Activated naive CD4-positive, alpha-beta T cell treated with anti-CD3 and anti-CD28 coated beads, Interleukin-2, amount 10 ng/mL, durations not matched to agents 7 days and 5 days (primary cell): ENCODE measurements at regions of chr19 and their contacts with region 1.

Region 1: DNA sequence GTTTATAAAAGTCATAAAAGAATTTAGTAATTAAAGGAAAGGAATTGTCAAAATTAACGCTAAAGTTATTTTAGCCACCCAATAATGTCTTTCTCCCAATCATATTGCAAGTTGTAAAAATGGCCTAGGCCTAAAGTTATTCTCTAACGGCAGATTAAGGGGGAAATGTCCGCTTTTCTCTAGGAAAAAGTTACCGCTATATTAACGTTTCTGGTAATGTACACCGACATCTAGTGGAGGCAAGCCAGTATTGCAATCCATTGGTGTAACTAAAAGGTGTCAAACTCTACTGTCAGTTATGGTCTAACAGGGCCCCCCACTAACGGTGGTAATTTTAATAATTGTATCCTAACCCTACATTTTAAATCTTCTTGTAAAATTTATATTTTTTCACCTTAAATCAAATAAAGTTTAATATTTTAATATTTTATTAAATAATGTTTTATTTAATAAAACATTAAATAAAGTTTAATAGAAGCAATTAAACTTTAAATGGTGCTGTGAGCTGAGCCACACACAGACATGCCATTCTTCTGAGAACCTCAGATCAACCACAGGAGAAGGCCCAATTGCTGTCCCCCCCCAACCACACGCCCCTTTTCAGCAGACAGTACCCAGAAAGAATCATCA is 35.9 kb upstream of the ZSCAN5A start:
- DNase-seq: peak; percentile 66
- H3K4me3 Mint-ChIP-seq: no peak overlapping the region
- H3K27ac Mint-ChIP-seq: no peak overlapping the region
- H3K4me1 Mint-ChIP-seq: no peaks in the 10 kb centered on the region
- H3K27me3 Mint-ChIP-seq: no peaks in the 10 kb centered on the region

Region 2: DNA sequence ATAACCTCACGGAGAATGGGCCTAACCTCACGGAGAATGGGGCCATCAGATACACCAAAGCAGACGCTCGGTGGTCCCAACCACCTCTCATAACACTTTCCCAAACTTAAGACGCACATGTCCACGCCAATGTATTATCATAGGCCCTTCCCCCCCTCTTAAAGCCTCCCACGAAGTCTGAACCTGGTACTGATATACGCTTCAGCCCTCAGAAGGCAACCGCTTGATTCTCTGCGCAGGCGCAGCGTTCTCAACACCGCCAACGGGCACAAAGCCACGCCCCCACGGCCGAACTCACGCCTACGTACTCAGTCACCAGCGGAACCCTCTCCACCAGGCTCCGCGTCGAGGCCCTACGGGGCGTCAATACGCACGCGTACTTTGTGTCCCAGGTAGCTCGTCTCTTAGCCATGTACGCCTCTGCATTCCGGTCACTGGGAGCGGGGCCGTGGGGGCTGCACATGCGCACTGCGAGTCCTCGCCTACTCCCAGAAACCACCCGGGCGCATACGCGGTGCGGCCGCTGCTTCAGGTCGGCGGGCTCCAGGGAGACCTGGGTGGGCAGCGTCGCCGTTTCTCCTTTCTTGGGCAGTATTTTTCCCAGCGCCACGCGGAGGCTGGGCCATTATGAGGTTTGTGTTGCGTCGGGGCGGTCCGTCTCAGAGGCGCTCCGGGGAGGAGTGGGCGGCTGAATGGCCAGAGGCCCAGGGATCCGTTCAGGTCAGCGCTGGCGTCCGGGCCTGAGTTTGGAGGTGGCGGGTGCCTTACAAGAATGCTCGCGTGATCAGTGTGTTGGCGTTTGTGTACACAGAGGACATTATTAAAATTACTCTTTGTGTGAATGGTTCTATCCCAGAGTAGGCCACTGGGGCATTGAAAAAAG is 17.5 kb after region 1 on chr19:
- CTCF ChIA-PET with region 1: interaction called, 11 read pairs
- DNase-seq: peak; percentile 88
- H3K4me3 Mint-ChIP-seq: peak overlapping the region; percentile 84
- H3K27ac Mint-ChIP-seq: peak overlapping the region; percentile 88
- H3K4me1 Mint-ChIP-seq: peaks cover 20% of the 10 kb centered on the region
- H3K27me3 Mint-ChIP-seq: peaks cover 9% of the 10 kb centered on the region

Region 3: DNA sequence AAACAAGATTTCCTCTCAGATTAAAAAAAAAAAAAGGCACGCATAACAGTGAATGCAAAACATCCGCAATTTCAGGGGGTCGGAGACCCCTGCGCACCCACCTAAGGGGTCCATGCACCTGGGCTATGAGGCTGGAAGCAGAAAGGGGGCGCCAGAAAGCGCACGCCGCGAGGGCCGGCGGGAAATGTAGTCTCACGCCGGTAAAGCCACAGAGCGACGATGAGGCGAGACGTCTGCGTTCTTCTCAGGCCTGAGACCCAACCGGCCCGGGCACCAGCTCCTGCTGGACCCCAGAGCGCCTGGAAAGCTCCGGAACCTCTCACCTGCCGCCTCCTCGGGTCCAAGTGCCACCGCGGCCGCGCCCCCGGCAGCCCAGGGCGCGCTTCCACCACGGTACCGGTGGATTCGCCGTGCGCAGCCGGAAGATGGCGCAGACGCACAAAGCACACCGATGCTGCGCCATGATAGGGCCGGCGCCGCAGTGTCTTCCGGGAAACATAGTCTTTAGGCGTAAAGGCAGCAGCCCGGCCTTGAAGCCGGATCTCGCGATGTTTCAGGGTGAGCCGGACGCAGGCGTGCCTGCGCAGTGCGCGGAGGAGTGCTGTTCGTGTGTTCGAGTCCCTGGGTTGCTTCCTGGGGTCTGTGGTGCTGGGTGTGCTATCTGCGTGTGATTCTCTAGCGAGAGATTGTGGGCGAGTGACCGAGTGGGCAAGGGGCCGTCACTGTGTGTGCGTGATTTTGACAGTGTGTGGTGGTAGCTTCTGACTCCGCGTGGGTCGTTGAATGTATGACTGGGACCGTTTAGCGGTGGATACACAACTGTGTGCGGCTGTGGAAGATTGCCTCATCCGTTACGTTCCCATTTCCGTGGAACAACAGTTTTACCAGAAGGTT is 42.8 kb after region 1 on chr19 and contains the start of gene ZNF582:
- CTCF ChIA-PET with region 1: no interaction called
- DNase-seq: peak; percentile 96
- H3K4me3 Mint-ChIP-seq: peak within 1 kb of the TSS; percentile 98
- H3K27ac Mint-ChIP-seq: peak within 1 kb of the TSS; percentile 94
- H3K4me1 Mint-ChIP-seq: peaks cover 20% of the 10 kb centered on the region
- H3K27me3 Mint-ChIP-seq: peaks cover 4% of the 10 kb centered on the region

Region 4: GRCh38 chr19:56692206-56692895 is 341.8 kb after region 1 on chr19:
- CTCF ChIA-PET with region 1: no interaction called
- DNase-seq: no peak
- H3K4me3 Mint-ChIP-seq: no peak overlapping the region
- H3K27ac Mint-ChIP-seq: no peak overlapping the region
- H3K4me1 Mint-ChIP-seq: no peaks in the 10 kb centered on the region
- H3K27me3 Mint-ChIP-seq: no peaks in the 10 kb centered on the region